ENCODE measurements at regions of chr1 and their contacts with region 1.

Region 1: GRCh38 chr1:30407865-30408580 is 315.4 kb downstream of the MATN1 start:
- DNase-seq: no peak

Region 2: DNA sequence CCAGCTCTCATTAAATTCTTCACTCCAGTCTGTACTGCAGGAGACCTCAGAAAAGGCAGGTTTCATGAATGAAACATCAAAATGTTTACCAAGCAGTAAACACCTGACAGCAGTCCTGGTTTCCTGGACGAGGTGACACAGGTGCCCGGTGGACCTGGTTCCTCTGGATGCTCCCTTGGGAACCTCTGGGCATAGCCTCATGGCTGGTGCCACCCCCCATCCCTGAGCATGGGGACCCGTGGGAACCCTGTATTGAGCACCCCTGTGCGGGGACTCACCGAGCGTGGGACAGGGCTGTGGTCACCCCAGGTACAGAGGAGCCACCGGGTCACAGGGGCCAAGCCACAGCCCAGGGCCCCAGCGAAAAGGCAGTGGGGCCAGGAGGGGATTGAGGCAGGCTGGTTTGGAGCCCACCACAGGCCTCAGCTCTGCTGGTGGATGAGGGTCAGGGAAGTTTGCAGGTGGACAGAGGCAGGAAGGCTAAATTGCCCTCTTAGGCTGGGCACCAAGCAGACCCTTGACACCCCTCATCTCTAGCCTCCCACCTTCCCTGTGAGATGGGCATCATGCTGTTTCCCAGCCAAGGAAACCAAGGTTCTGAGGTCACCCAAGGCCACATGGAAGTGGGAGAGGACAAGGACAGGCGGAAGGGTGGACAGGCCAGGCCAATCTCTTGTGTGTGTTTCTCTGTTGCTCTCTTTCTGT is 1013.4 kb before region 1 on chr1:
- in situ Hi-C with region 1: loop called (anchors 5 kb)
- DNase-seq: no peak

Measured in KBM-7 (cell line).